Prostate gland (tissue), 2 donors: ENCODE measurements at regions of chr12 and their contacts with region 1.

Region 1: DNA sequence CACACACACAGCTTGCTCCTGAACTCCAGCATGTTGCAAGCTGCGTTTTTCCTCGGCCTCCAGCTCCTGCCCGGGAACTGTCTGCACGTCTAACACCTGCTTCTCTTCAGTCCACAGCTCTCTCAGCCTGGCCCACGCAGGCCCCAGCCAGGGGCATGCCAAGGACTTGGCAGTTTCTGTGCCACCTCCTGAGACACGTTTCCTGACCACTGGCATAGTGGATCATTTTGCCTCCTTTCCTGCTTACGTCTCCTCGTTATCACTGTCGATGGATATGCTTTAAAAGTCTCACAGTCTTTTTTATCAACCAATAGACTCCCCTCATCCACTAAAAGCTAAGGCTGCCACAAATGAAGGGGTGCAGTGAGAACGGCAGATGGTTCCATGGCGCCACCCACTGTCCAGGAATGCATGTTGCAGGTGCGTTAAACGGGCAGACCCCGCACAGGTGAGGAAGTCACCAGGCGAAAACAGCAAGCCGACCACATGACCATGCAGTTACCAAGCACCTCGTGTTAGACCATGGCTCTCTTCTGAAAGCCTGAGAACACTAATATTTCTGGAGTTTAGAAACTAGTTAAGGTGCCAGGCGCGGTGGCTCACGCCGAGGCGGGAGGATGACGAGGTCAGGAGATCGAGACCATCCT is 14.7 kb upstream of the TEAD4 start:
- DNase-seq: peak; percentile 49
- H3K4me3 ChIP-seq: no peak overlapping the region
- H3K27ac ChIP-seq: no peak overlapping the region
- H3K4me1 ChIP-seq: no peaks in the 10 kb centered on the region
- H3K27me3 ChIP-seq: no peaks in the 10 kb centered on the region
- CTCF ChIP-seq: peak; percentile 56 to 82 (median 68)
- POLR2A ChIP-seq: no peak

Region 2: GRCh38 chr12:2884810-2885209 is 59.7 kb before region 1 on chr12:
- intact Hi-C with region 1: loop called (anchors 5 kb)
- DNase-seq: no peak
- H3K4me3 ChIP-seq: no peak overlapping the region
- H3K27ac ChIP-seq: no peak overlapping the region
- H3K4me1 ChIP-seq: no peaks in the 10 kb centered on the region
- H3K27me3 ChIP-seq: no peaks in the 10 kb centered on the region
- CTCF ChIP-seq: no peak
- POLR2A ChIP-seq: no peak